Vagina (tissue), 2 donors: ENCODE measurements at regions of chr3 and their contacts with region 1.

Region 1: GRCh38 chr3:17626395-17626794 is 116.0 kb downstream of the TBC1D5 start:
- DNase-seq: no peak
- H3K4me3 ChIP-seq: no peak overlapping the region
- H3K27ac ChIP-seq: no peak overlapping the region
- H3K4me1 ChIP-seq: peaks cover 5% of the 10 kb centered on the region
- H3K27me3 ChIP-seq: no peaks in the 10 kb centered on the region
- CTCF ChIP-seq: no peak
- POLR2A ChIP-seq: no peak

Region 2: GRCh38 chr3:17664923-17665322 is 38.5 kb after region 1 on chr3:
- intact Hi-C with region 1: no loop called
- DNase-seq: no peak
- H3K4me3 ChIP-seq: no peak overlapping the region
- H3K27ac ChIP-seq: no peak overlapping the region
- H3K4me1 ChIP-seq: no peaks in the 10 kb centered on the region
- H3K27me3 ChIP-seq: no peaks in the 10 kb centered on the region
- CTCF ChIP-seq: no peak
- POLR2A ChIP-seq: no peak

Region 3: DNA sequence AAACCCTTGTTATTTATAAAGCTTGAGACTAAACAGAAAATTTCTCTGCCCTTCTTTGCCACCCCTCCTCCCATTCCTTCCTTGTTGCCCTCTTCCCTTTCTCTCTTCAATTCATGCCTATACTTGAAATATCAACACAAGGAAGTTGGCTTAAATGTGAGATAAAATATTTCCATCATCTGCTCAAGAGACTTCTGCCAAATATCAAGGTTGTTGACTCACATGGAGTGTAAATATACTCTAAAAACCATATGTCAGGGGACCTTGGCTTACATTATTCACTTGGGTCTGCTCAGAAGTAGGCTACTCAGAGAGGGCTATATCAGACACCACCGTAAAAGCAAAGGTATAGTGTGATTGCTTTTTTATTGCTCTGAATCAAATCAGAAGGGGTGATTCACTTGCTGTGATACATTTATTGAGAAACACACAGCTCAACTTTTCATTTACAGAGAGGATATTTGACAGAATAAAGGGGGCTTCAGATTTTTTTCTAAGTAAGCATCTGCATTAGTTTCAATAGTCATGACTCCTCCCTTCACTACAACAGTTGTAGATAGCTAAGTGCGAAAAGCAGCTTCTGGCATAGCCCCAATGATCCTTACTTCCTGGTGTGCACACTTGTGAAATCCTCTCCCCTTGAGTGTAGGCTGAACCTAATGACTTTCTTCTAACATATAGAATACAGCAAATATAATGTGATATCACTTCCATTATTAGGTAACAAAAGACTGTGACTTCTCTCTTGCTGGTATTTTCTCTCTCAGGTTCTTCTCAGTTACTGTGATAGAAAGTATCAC is 1921.5 kb after region 1 on chr3:
- intact Hi-C with region 1: loop called (anchors 5 kb)
- DNase-seq: no peak
- H3K4me3 ChIP-seq: no peak overlapping the region
- H3K27ac ChIP-seq: no peak overlapping the region
- H3K4me1 ChIP-seq: no peaks in the 10 kb centered on the region
- H3K27me3 ChIP-seq: no peaks in the 10 kb centered on the region
- CTCF ChIP-seq: no peak
- POLR2A ChIP-seq: no peak